Panc1 (cell line): ENCODE measurements at regions of chr13 and their contacts with region 1.

Region 1: DNA sequence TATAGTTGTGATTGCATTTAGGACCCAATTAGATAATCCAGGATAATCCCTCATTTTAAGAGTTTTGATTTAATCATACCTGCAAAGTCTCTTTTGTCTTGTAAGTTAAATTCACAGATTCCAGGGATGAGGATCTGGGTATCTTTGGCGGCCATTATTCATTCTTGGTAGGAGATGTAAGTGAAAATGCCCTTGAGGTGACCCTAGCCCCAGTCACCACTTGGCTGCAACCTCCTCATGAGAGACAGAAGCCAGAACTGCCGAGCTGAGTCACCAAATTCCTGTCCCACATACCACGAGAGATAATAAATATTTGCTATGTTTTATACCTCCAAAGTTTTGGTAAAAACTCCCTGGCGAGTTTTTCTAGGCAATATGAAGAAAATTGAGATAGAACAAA is 389.4 kb downstream of the RFC3 start:
- DNase-seq: no peak
- ATAC-seq: no peak
- H3K4me3 ChIP-seq: no peak overlapping the region
- H3K27ac ChIP-seq: no peak overlapping the region
- H3K4me1 ChIP-seq: no peaks in the 10 kb centered on the region
- H3K27me3 ChIP-seq: no peaks in the 10 kb centered on the region
- CTCF ChIP-seq: no peak

Region 2: GRCh38 chr13:34011541-34012085 is 195.7 kb before region 1 on chr13:
- CTCF ChIA-PET with region 1: no interaction called
- POLR2A ChIA-PET with region 1: interaction called, 12 read pairs
- in situ Hi-C with region 1: no loop called
- intact Hi-C with region 1: no loop called
- DNase-seq: no peak
- ATAC-seq: no peak
- H3K4me3 ChIP-seq: no peak overlapping the region
- H3K27ac ChIP-seq: no peak overlapping the region
- H3K4me1 ChIP-seq: no peaks in the 10 kb centered on the region
- H3K27me3 ChIP-seq: no peaks in the 10 kb centered on the region
- CTCF ChIP-seq: no peak